GM18951 (cell line): ENCODE measurements at regions of chr11 and their contacts with region 1.

Region 1: DNA sequence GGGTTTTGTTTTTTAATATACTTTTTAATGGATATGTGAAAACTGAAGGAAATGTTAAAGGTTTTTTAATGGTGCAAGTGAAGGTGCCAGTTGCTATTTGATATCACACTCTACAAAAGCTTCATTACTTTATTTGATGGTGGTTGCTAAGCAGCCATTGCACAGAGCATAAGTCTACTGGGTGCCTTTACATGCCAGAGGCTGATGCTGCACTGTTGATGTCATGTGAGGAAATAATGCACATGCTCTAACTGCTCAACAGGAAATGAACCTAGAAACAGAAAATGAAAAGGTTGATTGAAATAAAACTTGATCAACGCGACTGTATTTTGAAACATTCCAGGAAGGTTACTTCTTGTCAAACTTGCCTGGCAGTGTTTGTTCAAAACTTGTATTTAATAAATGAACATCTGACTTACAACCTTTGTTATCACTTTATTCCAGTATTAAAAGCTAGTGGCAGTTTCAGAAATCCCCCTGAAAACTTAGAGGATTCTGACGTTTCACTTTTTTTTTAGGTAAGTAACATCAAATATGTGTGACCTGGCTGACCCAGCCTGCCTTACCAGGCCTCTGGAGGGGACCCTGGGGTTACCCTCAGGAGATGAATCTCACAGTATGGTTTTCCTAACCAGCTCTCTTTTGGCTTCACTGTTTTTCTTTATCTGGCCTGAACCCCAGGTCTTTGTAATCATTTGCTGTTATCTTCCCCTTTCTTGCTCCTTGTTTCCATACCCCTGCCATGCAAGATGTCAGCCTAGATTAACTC is 2.4 kb upstream of the ATP5MG start:
- POLR2A ChIP-seq: no peak

Region 2: DNA sequence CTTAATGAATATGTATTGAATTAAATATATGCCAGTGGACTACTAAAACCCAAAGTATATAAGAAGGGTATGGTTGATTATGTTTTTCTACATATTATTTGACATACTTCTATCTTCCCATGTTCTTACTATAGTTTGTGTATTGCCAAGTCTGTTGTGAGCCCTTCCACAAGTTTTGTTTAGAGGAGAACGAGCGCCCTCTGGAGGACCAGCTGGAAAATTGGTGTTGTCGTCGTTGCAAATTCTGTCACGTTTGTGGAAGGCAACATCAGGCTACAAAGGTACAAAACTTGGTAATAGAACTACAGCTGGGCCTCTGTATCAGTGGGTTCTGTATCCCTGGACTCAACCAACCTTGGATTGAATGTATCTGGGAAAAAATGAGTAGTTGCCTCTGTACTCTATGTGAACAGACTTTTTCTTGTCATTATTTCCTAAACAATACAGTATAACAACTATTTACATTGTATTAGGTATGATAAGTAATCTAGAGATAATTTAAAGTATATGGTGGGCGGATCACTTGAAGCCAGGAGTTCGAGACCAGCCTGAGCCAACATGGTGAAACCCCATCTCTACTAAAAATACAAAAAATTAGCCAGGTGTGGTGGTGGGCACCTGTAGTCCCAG is 89.6 kb after region 1 on chr11:
- in situ Hi-C with region 1: loop called (anchors 10 kb)
- POLR2A ChIP-seq: no peak